ENCODE measurements at regions of chr7 and their contacts with region 1.

Region 1: GRCh38 chr7:96104984-96105383 is 216.9 kb downstream of the SLC25A13 start:
- DNase-seq: no peak
- H3K4me3 ChIP-seq: no peak overlapping the region
- H3K27ac ChIP-seq: no peak overlapping the region
- H3K4me1 ChIP-seq: no peaks in the 10 kb centered on the region
- H3K27me3 ChIP-seq: no peaks in the 10 kb centered on the region
- CTCF ChIP-seq: no peak

Region 2: DNA sequence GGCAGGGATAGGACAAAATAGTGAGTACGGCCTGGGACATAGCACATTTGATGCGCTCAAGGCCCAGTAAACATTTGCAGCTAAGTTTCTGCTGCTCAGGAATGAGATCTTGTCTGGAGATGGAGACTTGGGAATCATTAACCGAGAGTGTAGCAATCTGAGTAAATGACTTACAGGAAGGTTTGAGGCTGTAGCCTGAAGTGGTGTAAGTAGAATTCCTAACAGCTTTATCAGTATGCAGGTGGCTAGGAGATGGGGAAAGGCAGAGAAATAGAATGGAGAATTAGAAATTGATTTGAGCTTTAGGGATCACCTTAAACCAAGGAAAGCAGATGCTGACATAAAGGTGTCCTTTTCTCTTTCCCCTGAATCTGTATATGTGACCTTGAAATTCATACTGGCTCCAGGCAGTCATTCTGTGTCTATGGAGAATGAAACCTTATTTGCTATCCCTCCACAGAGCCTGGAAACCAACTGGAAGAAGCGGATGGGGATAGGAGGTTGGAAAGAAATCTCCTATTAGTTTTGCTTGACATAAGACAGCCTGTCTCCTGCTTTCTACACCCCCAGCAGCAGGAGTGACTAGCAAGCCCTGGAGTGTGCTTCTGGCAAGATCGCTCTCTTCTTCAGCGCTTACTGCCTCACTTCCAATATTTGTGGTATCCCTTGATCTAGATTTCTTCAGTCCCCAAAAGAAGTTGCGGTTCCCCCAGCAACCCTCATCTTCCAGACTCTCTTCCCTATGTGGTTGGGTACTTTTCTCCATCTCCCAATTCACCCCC is 663.8 kb before region 1 on chr7:
- intact Hi-C with region 1: no loop called
- DNase-seq: no peak
- H3K4me3 ChIP-seq: no peak overlapping the region
- H3K27ac ChIP-seq: no peak overlapping the region
- H3K4me1 ChIP-seq: no peaks in the 10 kb centered on the region
- H3K27me3 ChIP-seq: no peaks in the 10 kb centered on the region
- CTCF ChIP-seq: no peak

Region 3: DNA sequence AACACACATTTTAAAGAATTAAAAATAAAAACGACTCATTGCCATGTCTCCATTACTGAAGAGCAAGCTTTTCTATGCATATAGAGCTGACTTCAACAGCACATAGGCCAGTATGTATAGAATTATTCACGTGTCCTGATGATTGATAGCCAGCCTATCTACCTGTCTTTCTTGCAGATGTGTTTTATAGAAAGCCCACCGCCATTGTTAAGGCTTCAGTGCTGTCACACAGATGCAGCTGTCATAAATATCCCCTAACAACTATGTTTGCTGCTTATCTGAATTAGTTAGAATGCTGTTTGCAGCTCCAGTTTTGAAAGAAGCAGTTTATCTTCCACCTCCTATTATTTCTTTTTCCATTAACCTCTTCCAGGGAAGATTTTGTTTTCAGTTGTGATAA is 19.0 kb before region 1 on chr7:
- intact Hi-C with region 1: loop called (anchors 1 kb)
- DNase-seq: no peak
- H3K4me3 ChIP-seq: no peak overlapping the region
- H3K27ac ChIP-seq: no peak overlapping the region
- H3K4me1 ChIP-seq: peaks cover 0 to 16% (median 0%) of the 10 kb centered on the region in 4 donors
- H3K27me3 ChIP-seq: no peaks in the 10 kb centered on the region
- CTCF ChIP-seq: no peak

Region 4: DNA sequence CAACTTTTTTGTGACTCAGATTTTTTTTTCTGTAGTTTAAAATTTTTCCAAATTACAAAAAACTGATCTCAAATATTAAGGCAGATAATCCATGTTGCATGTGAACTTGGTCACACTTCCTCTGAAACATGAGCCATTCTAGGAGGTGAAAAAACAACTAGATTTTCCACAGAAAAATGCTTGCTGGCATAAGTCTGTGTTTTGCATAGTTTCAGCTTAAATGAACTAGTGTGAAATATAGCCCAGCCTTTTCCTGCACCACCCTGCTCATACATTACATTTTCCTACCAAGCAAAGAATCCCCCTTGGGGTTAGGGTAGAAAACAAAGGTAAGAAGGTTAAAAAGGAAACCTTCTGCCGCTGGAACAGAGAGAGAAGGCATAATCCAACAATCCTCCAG is 168.7 kb after region 1 on chr7:
- intact Hi-C with region 1: no loop called
- DNase-seq: no peak
- H3K4me3 ChIP-seq: no peak overlapping the region
- H3K27ac ChIP-seq: no peak overlapping the region
- H3K4me1 ChIP-seq: peaks cover 0 to 5% (median 0%) of the 10 kb centered on the region in 4 donors
- H3K27me3 ChIP-seq: no peaks in the 10 kb centered on the region
- CTCF ChIP-seq: no peak